Lower lobe of right lung (tissue), 2 donors: ENCODE measurements at regions of chr11 and their contacts with region 1.

Region 1: GRCh38 chr11:11010624-11011127 is 152.8 kb upstream of the ZBED5 start:
- DNase-seq: peak; percentile 62
- ATAC-seq: peak; percentile 79 to 82
- H3K4me3 ChIP-seq: no peak overlapping the region
- H3K27ac ChIP-seq: no peak overlapping the region
- H3K4me1 ChIP-seq: peaks cover 9% of the 10 kb centered on the region
- H3K27me3 ChIP-seq: peaks cover 7% of the 10 kb centered on the region
- CTCF ChIP-seq: peak; percentile 41

Region 2: GRCh38 chr11:10680956-10681487 is 329.7 kb before region 1 on chr11:
- intact Hi-C with region 1: no loop called
- DNase-seq: no peak
- ATAC-seq: no peak
- H3K4me3 ChIP-seq: no peak overlapping the region
- H3K27ac ChIP-seq: no peak overlapping the region
- H3K4me1 ChIP-seq: peaks cover 2% of the 10 kb centered on the region
- H3K27me3 ChIP-seq: no peaks in the 10 kb centered on the region
- CTCF ChIP-seq: no peak

Region 3: GRCh38 chr11:10933455-10934292 is 77.0 kb before region 1 on chr11:
- intact Hi-C with region 1: loop called (anchors 10 kb)
- DNase-seq: peak; percentile 91
- ATAC-seq: peak; percentile 89 to 93
- H3K4me3 ChIP-seq: peak overlapping the region; percentile 54
- H3K27ac ChIP-seq: peak overlapping the region; percentile 76
- H3K4me1 ChIP-seq: peaks cover 29% of the 10 kb centered on the region
- H3K27me3 ChIP-seq: no peaks in the 10 kb centered on the region
- CTCF ChIP-seq: peak; percentile 93